ENCODE measurements at regions of chr13 and their contacts with region 1.

Region 1: GRCh38 chr13:51814825-51815650 is 11.1 kb upstream of the DHRS12 start:
- DNase-seq: peak; percentile 56 to 88 (median 68)
- ATAC-seq: peak; percentile 80
- H3K4me3 ChIP-seq: peak overlapping the region; percentile 13
- H3K4me3 Mint-ChIP-seq: peak overlapping the region; percentile 77
- H3K27ac ChIP-seq: peak overlapping the region in 1 of 2 donors; percentile 23
- H3K27ac Mint-ChIP-seq: peak overlapping the region; percentile 89
- H3K4me1 ChIP-seq: peaks cover 79% of the 10 kb centered on the region
- H3K4me1 Mint-ChIP-seq: peaks cover 84% of the 10 kb centered on the region
- H3K27me3 ChIP-seq: no peaks in the 10 kb centered on the region
- H3K27me3 Mint-ChIP-seq: no peaks in the 10 kb centered on the region
- CTCF ChIP-seq: peak; percentile 89

Region 2: GRCh38 chr13:51803422-51804294 is 11.4 kb before region 1 on chr13 and contains the start of gene DHRS12:
- CTCF ChIA-PET with region 1: interaction called, 5 read pairs
- POLR2A ChIA-PET with region 1: interaction called, 32 read pairs
- intact Hi-C with region 1: loop called in 1 of 2 experiments (anchors 2 kb)
- DNase-seq: peak; percentile 75 to 97 (median 82)
- ATAC-seq: peak; percentile 73
- H3K4me3 ChIP-seq: peak within 1 kb of the TSS; percentile 81
- H3K4me3 Mint-ChIP-seq: peak within 1 kb of the TSS; percentile 97
- H3K27ac ChIP-seq: peak within 1 kb of the TSS; percentile 99
- H3K27ac Mint-ChIP-seq: peak within 1 kb of the TSS; percentile 99
- H3K4me1 ChIP-seq: peaks cover 58% of the 10 kb centered on the region
- H3K4me1 Mint-ChIP-seq: peaks cover 61% of the 10 kb centered on the region
- H3K27me3 ChIP-seq: no peaks in the 10 kb centered on the region
- H3K27me3 Mint-ChIP-seq: no peaks in the 10 kb centered on the region
- CTCF ChIP-seq: no peak
- total RNA-seq, gene DHRS12: 10.0 to 14.8 TPM

Region 3: DNA sequence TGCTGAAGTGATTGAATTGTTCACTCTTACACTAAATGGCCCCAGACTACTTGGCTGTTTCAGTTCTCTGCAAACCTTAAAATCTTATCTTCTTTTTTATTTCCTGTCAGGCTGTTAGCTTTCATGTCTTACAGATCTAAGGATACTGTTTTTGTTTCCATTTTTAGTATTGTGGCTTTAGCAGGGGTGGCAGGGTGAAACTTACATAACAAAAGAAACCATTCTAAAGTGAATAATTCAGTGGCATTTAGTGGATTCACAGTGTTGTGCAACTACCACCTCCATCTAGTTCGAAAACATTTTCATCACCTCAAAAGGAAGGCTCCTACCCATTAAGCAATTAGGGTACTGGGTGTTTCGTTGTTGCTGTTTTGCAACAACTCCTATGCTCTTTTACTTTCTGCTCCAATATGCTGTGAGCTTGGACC is 10.1 kb after region 1 on chr13:
- CTCF ChIA-PET with region 1: interaction called, 20 read pairs
- POLR2A ChIA-PET with region 1: interaction called, 110 read pairs
- intact Hi-C with region 1: loop called in 1 of 2 experiments (anchors 1 kb)
- DNase-seq: peak in 4 of 14 experiments; percentile 39 to 85 (median 76)
- ATAC-seq: peak; percentile 58
- H3K4me3 ChIP-seq: peak overlapping the region; percentile 54
- H3K4me3 Mint-ChIP-seq: peak overlapping the region; percentile 86
- H3K27ac ChIP-seq: peak overlapping the region; percentile 76 to 79
- H3K27ac Mint-ChIP-seq: peak overlapping the region; percentile 89
- H3K4me1 ChIP-seq: peaks cover 78% of the 10 kb centered on the region
- H3K4me1 Mint-ChIP-seq: peaks cover 88% of the 10 kb centered on the region
- H3K27me3 ChIP-seq: no peaks in the 10 kb centered on the region
- H3K27me3 Mint-ChIP-seq: no peaks in the 10 kb centered on the region
- CTCF ChIP-seq: no peak

Region 4: DNA sequence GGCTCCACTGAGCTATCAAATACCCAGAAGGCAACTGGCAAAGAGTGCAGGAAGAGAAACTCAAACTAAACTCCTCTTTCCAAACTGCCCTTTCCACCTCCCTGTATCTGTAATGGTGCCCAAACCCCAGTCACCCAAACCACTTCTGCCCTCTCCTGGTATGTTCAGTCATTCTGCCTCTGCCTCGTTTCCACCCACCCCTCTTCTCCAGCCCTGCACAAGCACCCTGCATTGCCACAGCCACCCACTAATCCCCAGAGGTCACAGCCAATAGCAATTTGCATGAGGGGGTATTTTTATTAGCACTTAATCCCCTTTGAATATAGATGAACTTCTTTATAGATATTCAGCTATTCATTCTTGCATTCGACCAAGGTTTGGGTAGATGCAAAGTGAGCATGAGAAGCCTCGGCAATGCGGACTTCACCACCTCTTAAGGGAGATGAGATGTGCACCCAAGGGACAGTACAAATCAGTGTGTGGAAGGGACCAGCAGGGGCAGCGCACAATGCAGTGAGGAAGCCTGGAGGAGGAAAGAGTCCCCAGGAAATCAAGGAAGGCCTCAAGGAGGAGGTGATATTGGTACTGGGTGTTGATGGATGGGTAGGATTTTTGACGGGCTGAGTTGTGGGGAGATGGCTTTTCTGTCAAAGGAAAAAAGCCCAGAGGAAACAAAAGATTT is 17.6 kb after region 1 on chr13:
- CTCF ChIA-PET with region 1: interaction called, 44 read pairs
- POLR2A ChIA-PET with region 1: interaction called, 110 read pairs
- intact Hi-C with region 1: loop called (anchors 1 kb)
- DNase-seq: peak; percentile 45 to 85 (median 54)
- ATAC-seq: peak; percentile 99
- H3K4me3 ChIP-seq: no peak overlapping the region
- H3K4me3 Mint-ChIP-seq: peak overlapping the region; percentile 26
- H3K27ac ChIP-seq: no peak overlapping the region
- H3K27ac Mint-ChIP-seq: peak overlapping the region; percentile 54
- H3K4me1 ChIP-seq: peaks cover 28% of the 10 kb centered on the region
- H3K4me1 Mint-ChIP-seq: peaks cover 46% of the 10 kb centered on the region
- H3K27me3 ChIP-seq: no peaks in the 10 kb centered on the region
- H3K27me3 Mint-ChIP-seq: no peaks in the 10 kb centered on the region
- CTCF ChIP-seq: peak; percentile 70

Region 5: GRCh38 chr13:51844862-51845573 is 30.0 kb after region 1 on chr13 and contains the start of gene TMEM272:
- CTCF ChIA-PET with region 1: interaction called, 12 read pairs
- POLR2A ChIA-PET with region 1: interaction called, 6 read pairs
- intact Hi-C with region 1: loop called in 1 of 2 experiments (anchors 5 kb)
- DNase-seq: peak in 12 of 14 experiments; percentile 25 to 71 (median 44)
- ATAC-seq: peak; percentile 84
- H3K4me3 ChIP-seq: no peak within 1 kb of the TSS
- H3K4me3 Mint-ChIP-seq: no peak within 1 kb of the TSS
- H3K27ac ChIP-seq: no peak within 1 kb of the TSS
- H3K27ac Mint-ChIP-seq: no peak within 1 kb of the TSS
- H3K4me1 ChIP-seq: peaks cover 7% of the 10 kb centered on the region
- H3K4me1 Mint-ChIP-seq: peaks cover 7% of the 10 kb centered on the region
- H3K27me3 ChIP-seq: no peaks in the 10 kb centered on the region
- H3K27me3 Mint-ChIP-seq: peaks cover 6% of the 10 kb centered on the region
- CTCF ChIP-seq: peak; percentile 89
- total RNA-seq, gene TMEM272: 2.7 to 2.8 TPM

Region 6: GRCh38 chr13:52128714-52129700 is 314.0 kb after region 1 on chr13 and contains the start of gene NEK5:
- CTCF ChIA-PET with region 1: interaction called, 5 read pairs
- POLR2A ChIA-PET with region 1: no interaction called
- intact Hi-C with region 1: loop called in 1 of 2 experiments (anchors 1 kb)
- DNase-seq: peak; percentile 8 to 72 (median 39)
- ATAC-seq: peak; percentile 82
- H3K4me3 ChIP-seq: peak within 1 kb of the TSS; percentile 65
- H3K4me3 Mint-ChIP-seq: peak within 1 kb of the TSS; percentile 76
- H3K27ac ChIP-seq: no peak within 1 kb of the TSS
- H3K27ac Mint-ChIP-seq: no peak within 1 kb of the TSS
- H3K4me1 ChIP-seq: peaks cover 19% of the 10 kb centered on the region
- H3K4me1 Mint-ChIP-seq: peaks cover 20% of the 10 kb centered on the region
- H3K27me3 ChIP-seq: peaks cover 3 to 5% of the 10 kb centered on the region in 2 experiments
- H3K27me3 Mint-ChIP-seq: no peaks in the 10 kb centered on the region
- CTCF ChIP-seq: peak; percentile 70
- total RNA-seq, gene NEK5: 0.08 TPM in 1 of 2 experiments, not detected in the other

Region 7: GRCh38 chr13:52652196-52652979 is 837.4 kb after region 1 on chr13 and contains the start of gene SUGT1:
- CTCF ChIA-PET with region 1: no interaction called
- POLR2A ChIA-PET with region 1: no interaction called
- intact Hi-C with region 1: loop called in 1 of 2 experiments (anchors 10 kb)
- DNase-seq: peak; percentile 88 to 98 (median 94)
- ATAC-seq: peak; percentile 91
- H3K4me3 ChIP-seq: peak within 1 kb of the TSS; percentile 85
- H3K4me3 Mint-ChIP-seq: no peak within 1 kb of the TSS
- H3K27ac ChIP-seq: peak within 1 kb of the TSS; percentile 93 to 97
- H3K27ac Mint-ChIP-seq: no peak within 1 kb of the TSS
- H3K4me1 ChIP-seq: peaks cover 26% of the 10 kb centered on the region
- H3K4me1 Mint-ChIP-seq: peaks cover 12% of the 10 kb centered on the region
- H3K27me3 ChIP-seq: no peaks in the 10 kb centered on the region
- H3K27me3 Mint-ChIP-seq: no peaks in the 10 kb centered on the region
- CTCF ChIP-seq: peak; percentile 58
- total RNA-seq, gene SUGT1: 18.5 to 20.1 TPM

Measured in CD4-positive, alpha-beta T cell (primary cell).